ENCODE measurements at regions of chr1 and their contacts with region 1.

Region 1: DNA sequence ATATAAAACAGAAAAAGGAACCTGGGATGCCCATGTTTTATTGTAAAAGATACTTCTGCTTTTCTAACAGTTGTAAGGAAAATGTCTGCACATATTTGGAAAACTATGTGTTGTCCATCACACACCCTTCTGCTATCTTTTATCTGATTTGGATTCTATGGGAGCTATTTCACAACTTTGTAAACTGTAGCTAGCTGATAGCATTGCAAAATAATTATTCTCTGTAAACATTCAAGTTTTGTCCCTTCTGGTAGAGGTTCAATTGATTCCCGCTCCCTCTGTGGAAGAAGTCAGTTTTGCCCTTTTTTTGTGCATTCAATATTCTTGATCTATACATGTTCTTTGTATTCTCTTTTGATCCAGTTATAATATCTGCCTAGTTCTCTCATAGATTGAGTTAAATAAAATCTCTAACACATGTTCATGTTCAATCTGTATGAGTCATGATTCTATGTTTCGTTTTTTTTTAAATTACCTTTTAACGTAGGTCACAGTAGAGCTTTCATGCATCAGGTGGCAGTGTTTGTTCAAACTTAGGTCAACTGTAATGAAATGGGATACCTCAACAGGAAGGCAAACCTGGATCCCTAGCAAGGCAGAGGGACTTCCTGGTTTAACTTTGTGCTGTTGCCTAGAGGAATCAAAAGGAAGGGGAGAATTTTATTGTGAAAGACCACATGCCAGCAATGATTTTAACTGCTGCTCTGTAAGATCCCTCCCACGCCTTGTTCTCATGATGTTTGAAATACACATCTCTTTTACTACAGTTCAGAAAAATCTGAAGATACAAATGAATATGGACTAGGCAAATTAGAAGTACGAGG is 26.0 kb upstream of the BCL9 start:
- DNase-seq: peak; percentile 24
- H3K4me3 Mint-ChIP-seq: no peak overlapping the region
- H3K27ac Mint-ChIP-seq: no peak overlapping the region
- H3K4me1 Mint-ChIP-seq: peaks cover 12% of the 10 kb centered on the region
- H3K27me3 Mint-ChIP-seq: peaks cover 4% of the 10 kb centered on the region

Region 2: GRCh38 chr1:147124266-147124665 is 391.0 kb before region 1 on chr1:
- CTCF ChIA-PET with region 1: no interaction called
- intact Hi-C with region 1: no loop called
- DNase-seq: no peak
- H3K4me3 Mint-ChIP-seq: no peak overlapping the region
- H3K27ac Mint-ChIP-seq: no peak overlapping the region
- H3K4me1 Mint-ChIP-seq: no peaks in the 10 kb centered on the region
- H3K27me3 Mint-ChIP-seq: peaks cover 5% of the 10 kb centered on the region

Region 3: GRCh38 chr1:147627435-147628110 is 112.3 kb after region 1 on chr1:
- CTCF ChIA-PET with region 1: interaction called, 75 read pairs
- intact Hi-C with region 1: loop called (anchors 1 kb)
- DNase-seq: peak; percentile 62
- H3K4me3 Mint-ChIP-seq: no peak overlapping the region
- H3K27ac Mint-ChIP-seq: no peak overlapping the region
- H3K4me1 Mint-ChIP-seq: peaks cover 25% of the 10 kb centered on the region
- H3K27me3 Mint-ChIP-seq: no peaks in the 10 kb centered on the region

Region 4: DNA sequence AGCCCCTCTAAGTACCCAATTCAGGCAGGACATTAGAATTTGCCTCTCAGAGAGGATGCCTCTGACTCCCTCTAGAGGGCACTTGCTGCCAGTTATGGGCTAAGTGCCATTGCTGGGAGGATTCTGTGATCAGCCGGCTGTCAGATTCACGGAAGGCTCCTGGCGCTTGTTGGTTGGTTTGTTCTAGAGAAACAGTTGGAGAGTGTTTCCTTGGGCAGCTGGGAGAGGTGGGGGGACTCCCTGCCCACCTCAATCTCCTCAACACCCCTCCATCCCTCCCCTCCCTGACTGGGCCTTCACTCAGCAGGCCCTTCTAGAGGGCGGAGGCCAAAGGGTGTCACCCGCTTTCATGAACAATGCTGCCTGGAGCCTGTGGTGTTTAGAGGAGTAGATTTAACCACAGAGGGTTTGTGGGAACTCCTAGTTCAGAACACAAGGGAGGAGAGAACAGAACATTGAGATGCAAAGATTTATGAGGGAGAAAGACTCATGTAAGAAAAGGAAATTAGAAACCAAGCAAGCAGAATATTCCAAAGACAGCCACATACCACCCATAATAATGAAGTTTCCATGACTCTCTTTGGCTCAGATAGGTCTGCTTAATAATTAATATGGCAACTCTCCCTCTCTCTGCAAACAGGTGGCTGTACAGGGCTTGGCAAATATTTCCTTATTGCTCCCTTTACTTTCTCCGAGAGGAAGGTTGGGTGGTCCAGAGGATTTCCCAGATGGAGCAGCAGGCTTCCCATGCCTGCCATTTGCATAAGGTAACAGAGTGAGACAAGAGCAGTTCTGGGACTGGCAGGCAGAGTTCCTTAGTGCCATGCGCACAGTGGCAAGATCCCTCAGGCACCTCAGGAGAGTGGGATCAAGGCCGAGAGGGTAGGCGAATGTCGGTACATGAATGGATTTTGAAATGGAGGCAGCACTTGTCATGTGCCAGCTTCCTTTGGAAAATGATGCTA is 185.1 kb after region 1 on chr1:
- CTCF ChIA-PET with region 1: interaction called, 4 read pairs
- intact Hi-C with region 1: loop called (anchors 1 kb)
- DNase-seq: peak; percentile 78
- H3K4me3 Mint-ChIP-seq: no peak overlapping the region
- H3K27ac Mint-ChIP-seq: no peak overlapping the region
- H3K4me1 Mint-ChIP-seq: peaks cover 6% of the 10 kb centered on the region
- H3K27me3 Mint-ChIP-seq: no peaks in the 10 kb centered on the region

Measured in activated naive CD4-positive, alpha-beta T cell treated with anti-CD3 and anti-CD28 coated beads for 36 hours (primary cell).